Activated CD4-positive, alpha-beta memory T cell treated with anti-CD3 and anti-CD28 coated beads for 36 hours (primary cell): ENCODE measurements at regions of chr1 and their contacts with region 1.

Region 1: GRCh38 chr1:23496490-23497181 is 12.7 kb upstream of the ASAP3 start:
- DNase-seq: no peak
- H3K4me3 Mint-ChIP-seq: no peak overlapping the region
- H3K27ac Mint-ChIP-seq: no peak overlapping the region
- H3K4me1 Mint-ChIP-seq: peaks cover 3% of the 10 kb centered on the region
- H3K27me3 Mint-ChIP-seq: no peaks in the 10 kb centered on the region

Region 2: DNA sequence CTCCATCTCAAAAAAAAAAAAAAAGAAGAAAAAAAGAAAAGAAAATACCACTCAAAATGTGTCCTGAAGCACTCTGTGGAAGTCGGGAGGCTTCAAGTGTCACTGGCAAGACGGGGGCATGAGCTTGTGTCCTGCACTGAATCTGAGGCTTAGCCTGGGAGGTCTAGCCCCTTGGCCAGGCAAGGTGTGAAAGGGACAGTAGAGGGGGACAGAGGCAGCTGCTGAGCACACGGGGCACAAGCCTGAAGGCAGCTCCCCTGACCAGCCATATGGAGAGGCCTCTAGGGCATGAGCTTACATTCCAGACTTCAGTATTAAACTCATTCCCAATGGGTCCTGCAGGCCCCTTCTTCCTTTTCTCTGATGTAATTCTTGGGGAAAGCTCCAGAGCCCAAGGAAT is 10.9 kb after region 1 on chr1:
- CTCF ChIA-PET with region 1: interaction called, 45 read pairs
- POLR2A ChIA-PET with region 1: no interaction called
- intact Hi-C with region 1: no loop called
- DNase-seq: no peak
- H3K4me3 Mint-ChIP-seq: no peak overlapping the region
- H3K27ac Mint-ChIP-seq: no peak overlapping the region
- H3K4me1 Mint-ChIP-seq: no peaks in the 10 kb centered on the region
- H3K27me3 Mint-ChIP-seq: no peaks in the 10 kb centered on the region

Region 3: GRCh38 chr1:23524716-23525401 is 28.2 kb after region 1 on chr1:
- CTCF ChIA-PET with region 1: interaction called, 170 read pairs
- POLR2A ChIA-PET with region 1: no interaction called
- intact Hi-C with region 1: no loop called
- DNase-seq: peak; percentile 38
- H3K4me3 Mint-ChIP-seq: no peak overlapping the region
- H3K27ac Mint-ChIP-seq: peak overlapping the region; percentile 33
- H3K4me1 Mint-ChIP-seq: peaks cover 62% of the 10 kb centered on the region
- H3K27me3 Mint-ChIP-seq: no peaks in the 10 kb centered on the region

Region 4: DNA sequence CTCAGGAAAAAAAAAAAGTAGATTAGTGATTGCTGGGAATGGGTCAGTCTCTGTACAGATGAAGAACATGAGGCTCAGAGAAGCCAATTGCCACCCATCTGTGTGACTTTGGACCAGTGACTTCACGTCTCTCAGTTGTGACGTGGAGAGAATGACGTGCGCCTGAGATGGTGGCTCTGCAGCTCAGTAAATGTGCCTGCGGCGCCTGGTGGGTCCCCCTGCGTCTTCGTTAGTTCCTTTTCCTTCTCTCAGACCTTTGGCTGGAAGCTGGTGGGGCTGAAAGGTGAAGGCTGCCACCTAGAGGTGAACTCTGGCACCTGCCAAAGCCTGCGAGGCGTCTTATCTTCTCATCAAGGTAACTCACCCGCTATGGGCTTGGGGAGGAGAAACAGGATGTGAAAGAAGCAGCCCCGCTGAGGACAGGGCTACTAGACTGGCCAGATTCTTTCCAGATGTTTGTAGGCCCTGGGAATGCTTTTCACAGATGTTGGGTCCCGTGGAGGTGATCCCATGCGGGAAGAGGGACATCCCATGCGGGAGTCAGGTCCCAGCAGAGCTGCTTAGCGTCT is 43.1 kb after region 1 on chr1:
- CTCF ChIA-PET with region 1: interaction called, 274 read pairs
- POLR2A ChIA-PET with region 1: interaction called, 3 read pairs
- intact Hi-C with region 1: loop called (anchors 1 kb)
- DNase-seq: peak; percentile 96
- H3K4me3 Mint-ChIP-seq: peak overlapping the region; percentile 55
- H3K27ac Mint-ChIP-seq: peak overlapping the region; percentile 62
- H3K4me1 Mint-ChIP-seq: peaks cover 17% of the 10 kb centered on the region
- H3K27me3 Mint-ChIP-seq: no peaks in the 10 kb centered on the region